Tibial artery (tissue), 4 donors: ENCODE measurements at regions of chr10 and their contacts with region 1.

Region 1: DNA sequence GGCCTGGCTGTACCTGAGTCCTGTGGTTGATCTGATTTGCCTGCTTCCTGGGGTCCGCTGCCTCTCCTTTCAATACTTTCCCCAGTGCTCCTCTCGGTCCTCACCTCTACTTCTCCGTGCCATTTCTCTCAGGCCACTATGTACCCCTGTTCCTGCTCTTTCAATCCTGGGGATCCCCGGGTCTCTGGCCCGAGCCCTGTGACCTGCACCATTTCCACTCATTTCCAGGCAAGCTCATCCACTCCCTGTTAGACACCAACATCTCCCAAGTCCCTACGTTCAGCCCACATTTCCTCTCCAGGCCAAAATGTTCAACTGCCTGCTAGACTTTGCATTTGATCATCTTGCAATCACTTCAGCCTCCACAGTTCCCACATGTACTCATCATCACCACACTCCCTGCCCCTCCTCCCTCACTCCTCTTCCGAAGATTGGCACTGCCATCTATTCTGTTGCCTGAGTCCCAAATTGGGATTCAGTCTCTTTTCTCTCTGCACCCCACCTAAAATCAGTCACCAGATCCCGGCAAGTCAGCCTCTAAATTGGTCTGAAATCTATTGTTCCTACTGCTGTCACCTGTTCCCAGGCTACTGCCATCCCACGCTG is 34.4 kb upstream of the ZMIZ1 start:
- DNase-seq: peak; percentile 1 to 2
- H3K4me3 ChIP-seq: no peak overlapping the region
- H3K27ac ChIP-seq: no peak overlapping the region
- H3K4me1 ChIP-seq: no peaks in the 10 kb centered on the region
- H3K27me3 ChIP-seq: peaks cover 0 to 2% of the 10 kb centered on the region in 2 donors
- CTCF ChIP-seq: no peak

Region 2: GRCh38 chr10:78717200-78717599 is 317.2 kb before region 1 on chr10:
- intact Hi-C with region 1: no loop called
- DNase-seq: peak; percentile 60 to 79
- H3K4me3 ChIP-seq: no peak overlapping the region
- H3K27ac ChIP-seq: no peak overlapping the region
- H3K4me1 ChIP-seq: peaks cover 0 to 21% (median 8%) of the 10 kb centered on the region in 4 donors
- H3K27me3 ChIP-seq: no peaks in the 10 kb centered on the region
- CTCF ChIP-seq: no peak

Region 3: GRCh38 chr10:79054203-79055099 is 20.1 kb after region 1 on chr10:
- intact Hi-C with region 1: loop called (anchors 1 kb)
- DNase-seq: peak; percentile 15 to 37
- H3K4me3 ChIP-seq: no peak overlapping the region
- H3K27ac ChIP-seq: no peak overlapping the region
- H3K4me1 ChIP-seq: no peaks in the 10 kb centered on the region
- H3K27me3 ChIP-seq: peaks cover 0 to 4% of the 10 kb centered on the region in 2 donors
- CTCF ChIP-seq: no peak